ENCODE measurements at regions of chr9 and their contacts with region 1.

Region 1: DNA sequence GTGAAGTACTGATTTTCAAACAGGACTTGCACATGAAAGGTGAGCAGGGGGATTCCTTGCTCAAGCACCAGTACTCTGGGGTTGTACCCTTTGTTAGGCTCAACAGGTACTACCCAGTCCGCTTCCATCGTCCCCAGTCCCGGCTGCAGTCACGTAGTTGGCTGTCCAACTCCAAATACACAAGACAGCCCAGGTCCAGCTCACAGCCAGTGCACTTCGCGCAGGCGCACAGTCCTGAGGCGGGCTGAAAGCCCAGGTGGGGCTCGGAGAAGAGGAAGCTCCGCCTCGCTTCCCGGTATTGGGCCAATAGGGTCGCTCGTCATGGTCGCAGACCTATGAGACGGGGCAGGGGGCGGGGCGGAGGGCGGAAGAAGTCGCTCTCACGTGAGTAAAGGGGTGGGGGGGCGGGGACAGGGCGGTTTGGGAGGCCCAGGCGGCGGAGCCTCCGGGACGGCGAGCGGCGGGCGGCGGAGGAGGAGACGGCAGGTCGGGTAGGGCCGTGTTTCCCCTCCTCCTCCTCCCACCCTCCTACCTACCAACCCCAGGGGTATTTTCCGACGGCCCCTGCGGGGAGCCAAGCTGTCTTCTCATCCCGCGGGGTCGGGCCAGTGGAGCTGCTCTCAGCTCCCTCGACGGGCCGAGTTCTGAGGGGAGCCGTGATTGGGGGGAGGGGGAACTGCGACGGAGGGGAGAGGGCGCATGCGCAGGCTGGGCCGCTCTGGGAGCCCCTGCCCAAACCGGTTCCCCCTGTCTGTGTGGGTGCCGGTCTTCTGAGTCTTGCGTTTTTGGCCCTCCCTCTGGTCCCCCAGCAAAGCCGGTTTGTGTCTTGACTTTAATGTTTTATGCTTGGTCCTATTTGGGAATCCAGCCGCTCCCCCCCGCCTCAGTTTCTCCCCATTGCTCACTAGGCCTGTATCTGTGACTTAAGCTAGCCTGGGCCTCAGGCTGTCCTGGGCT is at the start of gene RABGAP1:
- DNase-seq: peak; percentile 91
- ATAC-seq: peak; percentile 99
- H3K4me3 ChIP-seq: peak within 1 kb of the TSS; percentile 78 to 90
- H3K27ac ChIP-seq: peak within 1 kb of the TSS; percentile 93
- H3K4me1 ChIP-seq: peaks cover 3% of the 10 kb centered on the region; the same call in 1 of the 2 replicates
- H3K27me3 ChIP-seq: no peaks in the 10 kb centered on the region
- CTCF ChIP-seq: no peak
- total RNA-seq, gene RABGAP1: 41.4 TPM

Region 2: GRCh38 chr9:122923947-122924346 is 16.9 kb before region 1 on chr9:
- CTCF ChIA-PET with region 1: no interaction called
- POLR2A ChIA-PET with region 1: interaction called, 10 read pairs
- in situ Hi-C with region 1: no loop called
- intact Hi-C with region 1: no loop called
- DNase-seq: no peak
- ATAC-seq: no peak
- H3K4me3 ChIP-seq: no peak overlapping the region
- H3K27ac ChIP-seq: no peak overlapping the region
- H3K4me1 ChIP-seq: no peaks in the 10 kb centered on the region
- H3K27me3 ChIP-seq: no peaks in the 10 kb centered on the region
- CTCF ChIP-seq: no peak

Region 3: GRCh38 chr9:123044586-123044985 is 103.7 kb after region 1 on chr9:
- CTCF ChIA-PET with region 1: no interaction called
- POLR2A ChIA-PET with region 1: no interaction called
- in situ Hi-C with region 1: no loop called
- intact Hi-C with region 1: no loop called
- DNase-seq: no peak
- ATAC-seq: no peak
- H3K4me3 ChIP-seq: no peak overlapping the region
- H3K27ac ChIP-seq: no peak overlapping the region
- H3K4me1 ChIP-seq: no peaks in the 10 kb centered on the region; the same call in 1 of the 2 replicates
- H3K27me3 ChIP-seq: no peaks in the 10 kb centered on the region
- CTCF ChIP-seq: no peak

Measured in Panc1 (cell line).